Naive thymus-derived CD4-positive, alpha-beta T cell (primary cell): ENCODE measurements at regions of chr7 and their contacts with region 1.

Region 1: GRCh38 chr7:149771721-149772240 is 1.6 kb downstream of the ZNF467 start:
- DNase-seq: peak; percentile 74 to 89 (median 85)
- ATAC-seq: peak; percentile 94
- H3K4me3 ChIP-seq: peak overlapping the region; percentile 72
- H3K4me3 Mint-ChIP-seq: peak overlapping the region; percentile 16 to 88 (median 78)
- H3K27ac ChIP-seq: peak overlapping the region; percentile 71
- H3K27ac Mint-ChIP-seq: peak overlapping the region in 6 of 9 donors; percentile 10 to 70 (median 42)
- H3K4me1 ChIP-seq: peaks cover 5 to 8% of the 10 kb centered on the region in 2 donors
- H3K4me1 Mint-ChIP-seq: peaks cover 2 to 29% (median 21%) of the 10 kb centered on the region in 7 donors
- H3K27me3 ChIP-seq: no peaks in the 10 kb centered on the region
- H3K27me3 Mint-ChIP-seq: peaks cover 0 to 46% (median 0%) of the 10 kb centered on the region in 5 donors

Region 2: DNA sequence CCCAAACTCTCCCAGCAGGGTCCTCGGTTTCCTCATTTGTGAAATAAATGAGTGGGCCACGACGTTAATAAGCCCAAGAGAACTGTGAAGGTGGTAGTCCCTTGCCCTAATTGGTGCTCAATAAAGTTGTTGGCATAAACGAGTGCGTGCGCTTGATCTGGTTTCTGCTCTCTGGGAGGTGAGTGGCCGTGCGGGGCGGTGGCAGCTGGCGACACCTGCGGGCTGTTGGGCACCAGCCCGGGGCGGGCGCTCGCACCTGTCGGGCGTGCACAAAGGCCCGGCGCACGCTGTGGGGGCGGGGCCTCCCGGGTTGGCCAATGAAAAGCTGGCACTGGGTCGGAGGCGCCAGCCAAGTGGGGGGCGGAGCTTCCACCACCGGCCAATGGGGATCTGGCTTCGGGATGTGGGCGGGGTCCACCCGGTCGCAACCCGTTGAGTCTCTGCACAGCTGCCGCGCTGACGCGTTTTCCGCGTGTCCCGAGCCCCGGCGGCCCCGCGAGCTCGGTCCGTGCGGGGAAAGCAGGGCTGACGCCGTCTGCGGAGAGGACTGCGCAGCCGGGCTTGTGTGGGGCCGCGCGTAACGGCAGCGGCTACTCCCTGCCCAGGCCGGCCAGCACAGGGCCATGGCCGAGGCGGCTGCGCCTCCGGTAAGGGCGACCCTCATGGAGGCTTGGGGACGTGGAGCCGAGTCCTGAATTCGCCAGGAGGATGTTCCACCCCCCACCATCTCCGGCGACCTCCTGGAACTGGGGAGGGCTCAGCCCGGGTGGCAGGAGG is 486.7 kb before region 1 on chr7:
- CTCF ChIA-PET with region 1: no interaction called
- POLR2A ChIA-PET with region 1: no interaction called
- intact Hi-C with region 1: loop called in 1 of 2 experiments (anchors 1 kb)
- DNase-seq: peak; percentile 96 to 99 (median 98)
- ATAC-seq: peak; percentile 98
- H3K4me3 ChIP-seq: peak overlapping the region; percentile 80
- H3K4me3 Mint-ChIP-seq: peak overlapping the region; percentile 79 to 97 (median 92)
- H3K27ac ChIP-seq: peak overlapping the region; percentile 72
- H3K27ac Mint-ChIP-seq: peak overlapping the region; percentile 76 to 96 (median 93)
- H3K4me1 ChIP-seq: peaks cover 30 to 36% of the 10 kb centered on the region in 2 donors
- H3K4me1 Mint-ChIP-seq: peaks cover 26 to 55% (median 46%) of the 10 kb centered on the region in 7 donors
- H3K27me3 ChIP-seq: no peaks in the 10 kb centered on the region
- H3K27me3 Mint-ChIP-seq: no peaks in the 10 kb centered on the region

Region 3: GRCh38 chr7:149714050-149714909 is 57.5 kb before region 1 on chr7:
- CTCF ChIA-PET with region 1: no interaction called
- POLR2A ChIA-PET with region 1: no interaction called
- intact Hi-C with region 1: loop called (anchors 1 kb)
- DNase-seq: peak; percentile 68 to 89 (median 84)
- ATAC-seq: peak; percentile 99
- H3K4me3 ChIP-seq: peak overlapping the region; percentile 75
- H3K4me3 Mint-ChIP-seq: peak overlapping the region; percentile 71 to 87 (median 80)
- H3K27ac ChIP-seq: peak overlapping the region; percentile 72
- H3K27ac Mint-ChIP-seq: peak overlapping the region in 4 of 9 donors; percentile 5 to 72 (median 54)
- H3K4me1 ChIP-seq: peaks cover 10 to 13% of the 10 kb centered on the region in 2 donors
- H3K4me1 Mint-ChIP-seq: peaks cover 12 to 26% (median 19%) of the 10 kb centered on the region in 7 donors
- H3K27me3 ChIP-seq: no peaks in the 10 kb centered on the region
- H3K27me3 Mint-ChIP-seq: peaks cover 0 to 4% (median 0%) of the 10 kb centered on the region in 5 donors

Region 4: GRCh38 chr7:149742075-149742701 is 29.6 kb before region 1 on chr7:
- CTCF ChIA-PET with region 1: interaction called, 3 read pairs
- POLR2A ChIA-PET with region 1: no interaction called
- intact Hi-C with region 1: loop called in 1 of 2 experiments (anchors 1 kb)
- DNase-seq: peak in 8 of 9 donors; percentile 32 to 64 (median 44)
- ATAC-seq: peak; percentile 79
- H3K4me3 ChIP-seq: peak overlapping the region; percentile 51
- H3K4me3 Mint-ChIP-seq: peak overlapping the region; percentile 70 to 88 (median 79)
- H3K27ac ChIP-seq: no peak overlapping the region
- H3K27ac Mint-ChIP-seq: peak overlapping the region in 2 of 9 donors; percentile 7 to 43
- H3K4me1 ChIP-seq: peaks cover 7 to 9% of the 10 kb centered on the region in 2 donors
- H3K4me1 Mint-ChIP-seq: peaks cover 10 to 14% (median 11%) of the 10 kb centered on the region in 7 donors
- H3K27me3 ChIP-seq: peaks cover 0 to 4% of the 10 kb centered on the region in 2 donors
- H3K27me3 Mint-ChIP-seq: peaks cover 35 to 51% (median 43%) of the 10 kb centered on the region in 5 donors

Region 5: DNA sequence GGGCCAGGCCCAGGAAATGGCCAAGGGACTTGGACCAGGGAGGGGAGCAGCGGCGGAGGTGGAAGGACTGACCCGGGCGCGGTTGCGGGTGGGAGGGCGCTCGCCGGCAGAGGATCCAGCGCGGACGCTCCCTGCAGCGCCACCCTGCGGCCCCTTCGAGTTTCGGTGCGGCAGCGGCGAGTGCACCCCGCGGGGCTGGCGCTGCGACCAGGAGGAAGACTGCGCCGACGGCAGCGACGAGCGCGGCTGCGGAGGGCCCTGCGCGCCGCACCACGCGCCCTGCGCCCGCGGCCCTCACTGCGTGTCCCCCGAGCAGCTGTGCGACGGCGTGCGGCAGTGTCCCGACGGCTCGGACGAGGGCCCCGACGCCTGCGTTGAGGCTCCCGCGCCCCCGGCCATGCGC is 18.4 kb after region 1 on chr7:
- CTCF ChIA-PET with region 1: no interaction called
- POLR2A ChIA-PET with region 1: no interaction called
- intact Hi-C with region 1: no loop called
- DNase-seq: peak in 7 of 9 donors; percentile 24 to 60 (median 41)
- ATAC-seq: peak; percentile 62
- H3K4me3 ChIP-seq: no peak overlapping the region
- H3K4me3 Mint-ChIP-seq: peak overlapping the region in 4 of 10 donors; percentile 13 to 61 (median 43)
- H3K27ac ChIP-seq: no peak overlapping the region
- H3K27ac Mint-ChIP-seq: no peak overlapping the region
- H3K4me1 ChIP-seq: no peaks in the 10 kb centered on the region
- H3K4me1 Mint-ChIP-seq: peaks cover 0 to 7% (median 0%) of the 10 kb centered on the region in 7 donors
- H3K27me3 ChIP-seq: no peaks in the 10 kb centered on the region
- H3K27me3 Mint-ChIP-seq: peaks cover 5 to 24% (median 20%) of the 10 kb centered on the region in 5 donors

Region 6: GRCh38 chr7:149838224-149838947 is 66.6 kb after region 1 on chr7 and contains the start of gene ZNF862:
- CTCF ChIA-PET with region 1: no interaction called
- POLR2A ChIA-PET with region 1: interaction called, 5 read pairs
- intact Hi-C with region 1: loop called (anchors 1 kb)
- DNase-seq: peak; percentile 84 to 96 (median 94)
- ATAC-seq: peak; percentile 99
- H3K4me3 ChIP-seq: peak within 1 kb of the TSS; percentile 67
- H3K4me3 Mint-ChIP-seq: peak within 1 kb of the TSS; percentile 85 to 97 (median 91)
- H3K27ac ChIP-seq: peak within 1 kb of the TSS; percentile 79
- H3K27ac Mint-ChIP-seq: peak within 1 kb of the TSS; percentile 77 to 96 (median 88)
- H3K4me1 ChIP-seq: peaks cover 12 to 22% of the 10 kb centered on the region in 2 donors
- H3K4me1 Mint-ChIP-seq: peaks cover 25 to 52% (median 48%) of the 10 kb centered on the region in 7 donors
- H3K27me3 ChIP-seq: no peaks in the 10 kb centered on the region
- H3K27me3 Mint-ChIP-seq: peaks cover 0 to 15% (median 3%) of the 10 kb centered on the region in 5 donors
- total RNA-seq, gene ZNF862: 36.9 to 112 (median 41.8) TPM

Region 7: DNA sequence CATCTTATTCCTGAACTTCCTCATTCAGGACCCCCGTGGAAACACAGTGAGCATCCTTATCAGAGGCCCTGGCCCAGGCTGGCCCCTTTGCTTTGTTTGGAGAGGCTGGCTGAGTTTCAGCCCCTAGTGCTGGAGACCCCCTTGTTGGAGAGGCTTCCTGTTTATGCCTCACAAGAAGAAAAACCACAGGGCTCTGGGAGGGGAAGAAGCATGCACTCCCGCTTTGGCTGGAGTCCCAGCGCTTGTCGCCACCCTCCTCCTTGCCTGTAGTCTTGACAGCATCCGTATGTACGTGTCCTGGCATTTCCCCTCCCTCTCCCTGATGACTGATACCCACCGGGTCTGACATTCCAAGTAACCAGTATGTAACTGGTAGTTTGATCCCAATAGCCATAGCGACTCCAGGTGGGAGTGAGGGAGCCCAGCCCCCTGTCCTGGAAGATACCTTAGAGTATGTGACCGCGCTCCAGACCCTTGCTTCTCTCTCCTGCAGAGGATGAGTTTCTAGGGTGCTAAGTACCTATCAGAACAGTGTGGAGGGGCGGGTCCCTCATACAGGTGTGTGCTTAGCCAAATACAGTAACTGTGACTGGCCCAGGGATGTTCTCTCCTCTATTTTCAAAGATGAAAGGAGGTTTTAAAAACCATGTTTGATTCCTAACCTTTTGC is 95.1 kb after region 1 on chr7:
- CTCF ChIA-PET with region 1: no interaction called
- POLR2A ChIA-PET with region 1: no interaction called
- intact Hi-C with region 1: loop called (anchors 2 to 5 kb)
- DNase-seq: no peak
- ATAC-seq: no peak
- H3K4me3 ChIP-seq: peak overlapping the region; percentile 10
- H3K4me3 Mint-ChIP-seq: peak overlapping the region; percentile 47 to 90 (median 76)
- H3K27ac ChIP-seq: peak overlapping the region; percentile 88
- H3K27ac Mint-ChIP-seq: peak overlapping the region; percentile 88 to 99 (median 97)
- H3K4me1 ChIP-seq: peaks cover 82 to 100% of the 10 kb centered on the region in 2 donors
- H3K4me1 Mint-ChIP-seq: peaks cover 57 to 98% (median 91%) of the 10 kb centered on the region in 7 donors
- H3K27me3 ChIP-seq: no peaks in the 10 kb centered on the region
- H3K27me3 Mint-ChIP-seq: no peaks in the 10 kb centered on the region

Region 8: GRCh38 chr7:151232091-151232916 is 1460.5 kb after region 1 on chr7 and contains the start of gene CHPF2:
- CTCF ChIA-PET with region 1: no interaction called
- POLR2A ChIA-PET with region 1: no interaction called
- intact Hi-C with region 1: loop called in 1 of 2 experiments (anchors 10 kb)
- DNase-seq: peak; percentile 74 to 91 (median 84)
- ATAC-seq: peak; percentile 94
- H3K4me3 ChIP-seq: peak within 1 kb of the TSS; percentile 90
- H3K4me3 Mint-ChIP-seq: peak within 1 kb of the TSS; percentile 93 to 100 (median 98)
- H3K27ac ChIP-seq: peak within 1 kb of the TSS; percentile 85
- H3K27ac Mint-ChIP-seq: peak within 1 kb of the TSS; percentile 87 to 99 (median 98)
- H3K4me1 ChIP-seq: peaks cover 19 to 23% of the 10 kb centered on the region in 2 donors
- H3K4me1 Mint-ChIP-seq: peaks cover 30 to 45% (median 39%) of the 10 kb centered on the region in 7 donors
- H3K27me3 ChIP-seq: no peaks in the 10 kb centered on the region
- H3K27me3 Mint-ChIP-seq: peaks cover 0 to 6% (median 0%) of the 10 kb centered on the region in 5 donors
- total RNA-seq, gene CHPF2: 32.3 to 45.8 (median 42.8) TPM